Right ventricle myocardium inferior (tissue), 1 donor: ENCODE measurements at regions of chrX and their contacts with region 1.

Region 1: GRCh38 chrX:154748712-154749343 is 2.0 kb downstream of the GAB3 start:
- DNase-seq: no peak
- ATAC-seq: peak; percentile 61

Region 2: GRCh38 chrX:153971450-153972367 is 777.1 kb before region 1 on chrX and contains the start of gene HCFC1:
- intact Hi-C with region 1: loop called (anchors 10 kb)
- DNase-seq: peak; percentile 96
- ATAC-seq: peak; percentile 78
- total RNA-seq, gene HCFC1: 25.4 TPM

Region 3: GRCh38 chrX:154698630-154699248 is 50.1 kb before region 1 on chrX:
- intact Hi-C with region 1: loop called (anchors 2 kb)
- DNase-seq: no peak
- ATAC-seq: peak; percentile 83

Region 4: DNA sequence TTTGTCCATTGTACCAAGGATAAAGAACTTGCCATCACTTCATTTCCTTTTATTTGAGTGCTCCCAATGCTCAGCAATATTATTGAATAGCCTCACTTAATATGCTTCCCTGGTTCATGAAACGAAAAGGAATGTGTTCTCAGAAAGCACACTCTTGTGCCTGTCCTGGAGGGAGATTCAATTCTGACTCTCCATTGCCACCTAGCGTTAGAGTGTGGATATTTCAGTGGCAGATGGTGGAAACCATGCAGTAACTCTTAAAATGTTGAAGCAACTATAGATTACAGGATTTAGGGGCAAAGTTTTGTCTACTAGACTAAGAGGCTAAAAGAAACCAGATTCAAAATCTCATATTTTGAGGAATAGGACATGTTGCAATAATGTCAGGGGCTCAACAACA is 33.9 kb before region 1 on chrX:
- intact Hi-C with region 1: loop called (anchors 5 kb)
- DNase-seq: no peak
- ATAC-seq: peak; percentile 71

Region 5: GRCh38 chrX:154734061-154734781 is 14.6 kb before region 1 on chrX:
- intact Hi-C with region 1: loop called (anchors 2 kb)
- DNase-seq: peak; percentile 67
- ATAC-seq: peak; percentile 32

Region 6: DNA sequence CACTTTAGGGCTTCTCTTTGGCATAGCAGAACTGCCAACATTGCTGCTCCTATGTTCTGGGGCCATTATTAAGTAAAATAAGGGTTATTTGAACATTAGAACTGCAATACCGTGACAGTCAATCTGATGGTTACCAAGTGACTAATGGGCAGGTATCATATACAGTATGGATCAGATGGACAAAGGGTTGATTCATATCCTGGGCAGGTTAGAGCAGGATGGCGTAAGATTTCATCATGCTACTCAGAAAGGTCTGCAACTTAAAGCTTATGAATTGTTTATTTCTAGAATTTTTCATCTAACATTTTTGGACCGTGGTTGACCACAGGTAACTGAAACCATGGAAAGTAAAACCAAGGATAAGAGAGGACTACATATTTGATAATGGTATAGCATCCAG is 363.3 kb after region 1 on chrX:
- intact Hi-C with region 1: no loop called
- DNase-seq: no peak
- ATAC-seq: no peak